ENCODE measurements at regions of chr1 and their contacts with region 1.

Region 1: DNA sequence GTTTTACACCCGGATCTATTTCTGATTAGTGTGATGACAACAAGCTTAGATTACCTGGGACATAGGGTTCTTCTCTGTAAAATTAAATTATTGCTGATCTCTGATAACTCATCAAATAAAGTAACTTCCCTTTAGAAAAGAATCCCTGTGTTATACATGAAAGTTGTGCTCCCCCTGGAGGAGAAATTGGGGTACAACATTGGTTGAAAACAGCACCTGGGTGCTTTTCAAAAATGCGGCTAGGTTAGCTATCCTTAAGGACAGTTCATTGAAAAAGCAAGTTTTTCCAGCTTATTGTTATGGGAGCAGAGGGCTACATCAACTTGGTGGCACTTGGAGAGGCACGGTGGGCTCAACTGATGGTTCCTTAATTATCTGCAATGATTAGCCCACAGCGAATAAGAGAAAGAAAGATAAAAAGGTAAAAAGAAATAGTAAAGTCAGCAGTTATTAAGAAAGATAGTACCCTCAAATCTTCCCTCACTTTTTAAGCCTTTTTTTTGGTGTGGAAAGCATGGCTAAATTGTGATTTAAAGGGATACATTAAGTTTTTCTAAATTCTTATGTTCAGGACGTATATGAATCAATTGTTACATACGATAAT is 97.8 kb downstream of the FMN2 start:
- DNase-seq: peak; percentile 88
- H3K4me3 Mint-ChIP-seq: no peak overlapping the region
- H3K27ac Mint-ChIP-seq: no peak overlapping the region
- H3K4me1 Mint-ChIP-seq: peaks cover 14% of the 10 kb centered on the region
- H3K27me3 Mint-ChIP-seq: peaks cover 34% of the 10 kb centered on the region
- CTCF ChIP-seq: peak; percentile 90

Region 2: DNA sequence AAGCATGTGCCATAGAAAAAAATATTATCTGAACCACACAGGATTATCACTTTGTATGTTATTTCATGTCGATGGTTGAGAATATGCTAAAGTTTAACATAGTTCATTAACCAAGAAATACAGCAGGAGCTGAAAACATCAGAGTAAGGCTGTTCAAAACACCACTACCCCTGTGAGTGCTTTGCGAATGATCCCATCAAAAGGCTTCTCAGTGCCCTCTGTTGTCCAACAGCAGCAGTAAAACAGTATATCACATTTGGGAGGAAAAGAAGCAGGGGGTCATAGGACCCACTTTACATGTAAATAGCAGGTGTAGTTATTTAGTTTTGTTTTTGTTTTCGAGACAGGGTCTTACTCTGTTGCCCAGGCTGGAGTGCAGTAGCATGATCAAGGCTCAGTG is 387.2 kb before region 1 on chr1:
- CTCF ChIA-PET with region 1: no interaction called
- POLR2A ChIA-PET with region 1: no interaction called
- intact Hi-C with region 1: no loop called
- DNase-seq: no peak
- H3K4me3 Mint-ChIP-seq: no peak overlapping the region
- H3K27ac Mint-ChIP-seq: no peak overlapping the region
- H3K4me1 Mint-ChIP-seq: peaks cover 11% of the 10 kb centered on the region
- H3K27me3 Mint-ChIP-seq: no peaks in the 10 kb centered on the region
- CTCF ChIP-seq: no peak

Region 3: DNA sequence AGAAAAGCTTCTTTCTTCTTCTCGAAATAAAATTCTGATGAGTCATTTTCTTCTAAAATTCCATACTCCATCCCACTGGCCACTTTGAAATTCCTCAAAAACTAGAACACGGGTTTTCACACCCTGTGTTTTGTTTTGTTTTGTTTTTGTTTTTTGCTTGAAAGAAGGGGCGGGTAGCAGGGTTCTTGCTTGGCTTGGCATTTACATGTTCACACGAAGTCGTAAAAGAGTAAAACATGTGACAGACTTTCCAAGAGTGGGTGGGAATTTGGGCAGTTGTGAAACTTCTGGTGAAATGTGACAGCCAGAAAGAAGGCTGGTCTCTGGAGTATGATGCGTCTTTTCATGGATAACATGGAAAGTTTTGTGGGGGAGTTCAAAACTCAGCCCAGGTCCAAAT is 144.9 kb before region 1 on chr1:
- CTCF ChIA-PET with region 1: interaction called, 12 read pairs
- POLR2A ChIA-PET with region 1: no interaction called
- intact Hi-C with region 1: no loop called
- DNase-seq: peak; percentile 47
- H3K4me3 Mint-ChIP-seq: no peak overlapping the region
- H3K27ac Mint-ChIP-seq: no peak overlapping the region
- H3K4me1 Mint-ChIP-seq: no peaks in the 10 kb centered on the region
- H3K27me3 Mint-ChIP-seq: no peaks in the 10 kb centered on the region
- CTCF ChIP-seq: no peak

Region 4: DNA sequence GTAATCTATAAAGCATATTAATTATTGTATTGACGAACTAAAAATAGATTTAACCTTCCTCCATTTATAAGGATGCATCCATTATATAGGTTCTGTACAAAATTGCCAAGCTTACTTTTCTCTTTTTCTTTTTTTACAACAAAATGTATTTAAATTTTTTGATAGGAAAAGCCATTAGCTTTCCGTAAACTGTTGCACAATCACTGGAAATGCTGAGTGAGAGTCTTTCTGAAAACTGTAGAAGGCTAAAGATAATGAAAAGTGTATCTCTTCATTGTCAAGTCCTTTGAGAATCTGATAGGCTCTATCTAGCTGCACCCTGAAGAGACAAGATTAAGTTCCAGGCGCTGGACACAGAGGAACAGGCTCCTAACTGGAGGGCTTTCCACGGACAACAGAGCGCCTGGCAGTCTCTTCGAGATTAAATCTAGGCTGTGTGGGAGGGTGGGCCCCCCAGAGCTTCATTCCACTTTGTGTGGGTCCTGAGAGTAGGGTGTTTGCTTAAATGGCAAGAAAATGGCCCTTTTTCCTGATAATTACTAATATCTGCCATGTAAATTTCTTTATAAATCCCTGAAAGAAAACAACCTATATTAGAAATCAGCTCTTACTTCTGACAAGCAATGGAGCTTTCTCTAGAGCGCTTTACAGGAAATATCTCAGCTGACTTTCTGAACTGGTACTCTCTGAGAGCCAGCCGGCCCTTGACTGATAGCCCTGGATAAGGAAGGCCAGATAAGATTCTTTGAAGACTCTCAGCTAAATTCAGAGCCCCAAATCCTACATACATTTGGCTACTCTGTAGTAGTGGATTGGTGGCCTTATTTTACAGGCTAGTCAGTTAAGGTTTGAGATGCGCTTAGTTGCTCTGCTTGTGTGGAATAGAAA is 10.5 kb after region 1 on chr1:
- CTCF ChIA-PET with region 1: interaction called, 91 read pairs
- POLR2A ChIA-PET with region 1: interaction called, 3 read pairs
- intact Hi-C with region 1: no loop called
- DNase-seq: no peak
- H3K4me3 Mint-ChIP-seq: no peak overlapping the region
- H3K27ac Mint-ChIP-seq: no peak overlapping the region
- H3K4me1 Mint-ChIP-seq: no peaks in the 10 kb centered on the region
- H3K27me3 Mint-ChIP-seq: no peaks in the 10 kb centered on the region
- CTCF ChIP-seq: no peak

Region 5: GRCh38 chr1:240435968-240436566 is 246.6 kb after region 1 on chr1:
- CTCF ChIA-PET with region 1: interaction called, 17 read pairs
- POLR2A ChIA-PET with region 1: no interaction called
- intact Hi-C with region 1: no loop called
- DNase-seq: peak; percentile 78
- H3K4me3 Mint-ChIP-seq: peak overlapping the region; percentile 36
- H3K27ac Mint-ChIP-seq: peak overlapping the region; percentile 70
- H3K4me1 Mint-ChIP-seq: peaks cover 9% of the 10 kb centered on the region
- H3K27me3 Mint-ChIP-seq: no peaks in the 10 kb centered on the region
- CTCF ChIP-seq: no peak

Region 6: DNA sequence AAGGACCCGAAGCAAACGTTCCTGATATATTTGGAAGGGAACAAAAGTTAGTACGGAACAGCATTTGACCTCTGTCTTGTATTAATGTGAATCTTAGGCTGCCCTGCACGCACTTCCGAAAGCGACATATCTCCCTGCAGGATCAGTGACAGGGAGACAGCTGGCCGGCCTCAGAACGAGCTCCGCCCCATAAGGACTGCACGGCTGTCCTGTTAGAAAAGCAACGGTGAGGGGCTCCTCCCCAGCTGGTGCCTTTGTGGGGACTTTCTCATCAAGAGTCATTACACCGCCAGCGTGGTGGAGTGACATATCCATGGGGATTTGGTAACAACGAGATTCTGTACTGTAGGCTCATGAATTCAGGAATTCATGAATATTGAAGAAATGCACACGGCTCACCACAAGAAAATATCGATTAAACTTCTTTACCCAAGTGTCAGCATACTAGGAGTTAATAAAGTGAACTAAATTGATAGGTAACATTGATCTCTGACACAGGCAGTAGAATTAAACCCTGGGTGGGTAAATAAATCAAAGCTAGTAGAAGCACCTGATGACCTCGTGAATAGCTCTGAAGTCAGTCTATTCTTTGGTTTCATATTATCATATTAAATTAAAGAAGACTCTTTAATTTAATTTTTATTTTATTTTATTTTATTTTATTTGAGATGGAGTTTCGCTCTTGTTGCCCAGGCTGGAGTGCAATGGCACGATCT is 430.6 kb after region 1 on chr1:
- CTCF ChIA-PET with region 1: interaction called, 14 read pairs
- POLR2A ChIA-PET with region 1: no interaction called
- intact Hi-C with region 1: no loop called
- DNase-seq: no peak
- H3K4me3 Mint-ChIP-seq: no peak overlapping the region
- H3K27ac Mint-ChIP-seq: no peak overlapping the region
- H3K4me1 Mint-ChIP-seq: peaks cover 15% of the 10 kb centered on the region
- H3K27me3 Mint-ChIP-seq: no peaks in the 10 kb centered on the region
- CTCF ChIP-seq: no peak

Region 7: GRCh38 chr1:240806201-240806745 is 616.8 kb after region 1 on chr1:
- CTCF ChIA-PET with region 1: no interaction called
- POLR2A ChIA-PET with region 1: no interaction called
- intact Hi-C with region 1: no loop called
- DNase-seq: no peak
- H3K4me3 Mint-ChIP-seq: no peak overlapping the region
- H3K27ac Mint-ChIP-seq: no peak overlapping the region
- H3K4me1 Mint-ChIP-seq: peaks cover 24% of the 10 kb centered on the region
- H3K27me3 Mint-ChIP-seq: no peaks in the 10 kb centered on the region
- CTCF ChIP-seq: no peak

Region 8: GRCh38 chr1:240946926-240947325 is 757.4 kb after region 1 on chr1:
- CTCF ChIA-PET with region 1: interaction called, 3 read pairs
- POLR2A ChIA-PET with region 1: no interaction called
- intact Hi-C with region 1: loop called (anchors 2 kb)
- DNase-seq: peak; percentile 85
- H3K4me3 Mint-ChIP-seq: no peak overlapping the region
- H3K27ac Mint-ChIP-seq: no peak overlapping the region
- H3K4me1 Mint-ChIP-seq: no peaks in the 10 kb centered on the region
- H3K27me3 Mint-ChIP-seq: no peaks in the 10 kb centered on the region
- CTCF ChIP-seq: peak; percentile 81

Measured in MCF 10A (cell line).